T-cell (primary cell): ENCODE measurements at regions of chr2 and their contacts with region 1.

Region 1: DNA sequence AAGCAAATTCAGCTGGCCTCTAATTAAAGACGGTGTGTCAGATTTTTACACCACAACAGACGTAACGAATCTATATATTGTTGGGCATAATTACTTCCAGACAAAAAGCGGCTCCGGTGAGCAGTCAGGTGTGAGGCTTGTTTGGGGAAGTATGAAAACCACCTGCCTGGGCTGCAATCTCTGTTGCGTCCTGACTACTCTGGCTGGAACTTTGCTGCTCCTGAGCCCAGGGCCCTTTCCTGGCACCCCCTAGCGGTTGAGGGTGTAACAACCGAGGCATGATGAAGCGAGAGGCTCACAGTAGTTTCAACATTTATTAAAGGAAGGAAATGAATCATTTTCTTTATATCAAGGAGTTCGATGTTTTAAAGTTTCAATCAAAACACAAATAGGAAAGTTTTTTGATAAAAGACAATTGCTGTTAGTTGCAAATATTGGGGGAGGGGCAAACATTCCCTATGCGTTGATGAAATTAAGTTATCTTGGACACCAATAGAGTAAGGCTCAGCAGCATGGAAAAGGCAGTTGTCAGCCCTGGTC is 10.6 kb upstream of the ITGB6 start:
- DNase-seq: peak; percentile 33 to 78 (median 64)
- ATAC-seq: peak; percentile 71 to 92 (median 88)
- H3K4me3 ChIP-seq: no peak overlapping the region
- H3K4me3 Mint-ChIP-seq: no peak overlapping the region
- H3K27ac ChIP-seq: no peak overlapping the region
- H3K27ac Mint-ChIP-seq: no peak overlapping the region
- H3K4me1 ChIP-seq: peaks cover 0 to 4% of the 10 kb centered on the region in 2 experiments
- H3K4me1 Mint-ChIP-seq: peaks cover 13 to 17% (median 14%) of the 10 kb centered on the region in 3 donors
- H3K27me3 ChIP-seq: peaks cover 0 to 5% of the 10 kb centered on the region in 2 experiments
- H3K27me3 Mint-ChIP-seq: peaks cover 7 to 10% of the 10 kb centered on the region in 2 donors

Region 2: DNA sequence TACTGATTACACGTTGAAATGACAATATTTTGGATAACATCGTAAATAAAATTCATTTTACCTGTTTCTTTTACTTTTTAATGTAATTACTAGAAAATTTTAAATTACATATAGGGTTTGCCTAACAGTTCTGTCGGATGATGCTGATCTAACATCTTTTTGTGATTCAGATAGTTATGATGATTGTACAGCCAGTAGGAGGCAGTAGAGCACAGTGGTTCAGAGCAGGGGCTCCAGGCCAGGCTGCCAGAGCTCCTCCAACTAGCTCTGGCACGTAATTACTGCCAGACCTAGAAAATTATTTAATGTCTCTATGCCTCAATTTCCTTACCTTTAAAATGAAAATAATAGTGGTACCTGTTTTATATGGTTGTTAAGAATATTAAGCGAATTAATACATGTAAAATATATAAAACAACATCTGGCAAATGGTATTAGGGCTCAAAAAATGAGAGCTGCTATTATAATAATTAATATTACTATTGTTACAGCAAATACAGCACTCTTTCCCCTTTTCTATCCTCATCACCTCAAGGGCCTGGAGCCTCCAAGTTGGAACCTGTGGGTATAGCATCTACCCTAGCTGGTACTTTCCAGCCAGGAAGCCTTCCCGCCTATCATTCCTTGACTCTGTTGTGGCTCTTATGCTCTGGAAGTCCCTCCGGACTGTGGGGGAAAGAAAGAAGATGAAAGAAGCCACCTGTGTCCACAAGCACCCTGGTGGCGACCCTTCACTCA is 100.6 kb before region 1 on chr2:
- CTCF ChIA-PET with region 1: interaction called, 13 to 15 read pairs
- POLR2A ChIA-PET with region 1: no interaction called
- DNase-seq: peak in 33 of 35 experiments; percentile 8 to 78 (median 37)
- ATAC-seq: peak in 3 of 4 experiments; percentile 50 to 71 (median 52)
- H3K4me3 ChIP-seq: no peak overlapping the region
- H3K4me3 Mint-ChIP-seq: no peak overlapping the region
- H3K27ac ChIP-seq: no peak overlapping the region
- H3K27ac Mint-ChIP-seq: no peak overlapping the region
- H3K4me1 ChIP-seq: no peaks in the 10 kb centered on the region
- H3K4me1 Mint-ChIP-seq: no peaks in the 10 kb centered on the region
- H3K27me3 ChIP-seq: no peaks in the 10 kb centered on the region
- H3K27me3 Mint-ChIP-seq: peaks cover 5 to 19% of the 10 kb centered on the region in 2 donors

Region 3: DNA sequence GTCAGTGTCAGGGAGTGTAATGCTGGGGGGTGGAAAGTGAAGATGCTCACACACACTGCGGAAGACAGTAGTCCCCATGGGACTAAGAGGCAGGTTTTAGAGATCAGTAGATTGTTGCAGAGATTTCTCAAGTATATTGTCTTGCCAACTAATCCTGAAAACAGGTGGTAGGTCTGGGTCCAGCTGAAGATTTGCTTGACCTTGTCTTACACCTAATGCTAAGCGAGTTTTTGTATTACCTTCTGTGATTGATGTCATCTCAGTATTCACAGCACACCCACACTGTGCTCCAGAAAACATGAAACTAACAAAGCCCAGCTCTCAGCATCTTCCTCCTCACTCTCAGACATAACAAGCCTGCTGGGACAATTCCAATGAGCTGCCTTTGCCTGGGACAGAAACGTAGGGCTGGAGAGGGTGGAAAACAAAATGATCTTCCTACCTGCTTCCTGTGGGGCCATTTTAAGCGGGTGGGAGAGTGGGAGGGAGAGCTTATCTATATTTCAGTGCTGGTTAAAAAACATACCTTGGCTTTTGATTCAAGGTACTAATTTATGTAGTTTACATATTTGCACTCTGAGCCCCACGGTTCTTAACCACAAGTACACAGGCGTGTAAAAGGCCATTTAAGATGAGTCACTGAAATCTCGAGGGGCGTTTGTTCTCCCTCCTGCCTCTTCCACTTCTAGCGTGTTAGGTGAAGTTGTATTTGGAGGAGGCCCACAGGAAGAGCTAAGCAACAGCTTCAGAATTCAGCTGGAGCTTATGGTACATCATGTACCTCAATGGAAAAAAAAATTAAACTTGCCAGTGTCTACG is 306.1 kb after region 1 on chr2:
- CTCF ChIA-PET with region 1: no interaction called
- POLR2A ChIA-PET with region 1: no interaction called
- DNase-seq: no peak
- ATAC-seq: peak; percentile 28 to 80 (median 52)
- H3K4me3 ChIP-seq: no peak overlapping the region
- H3K4me3 Mint-ChIP-seq: peak overlapping the region in 1 of 3 donors; percentile 5
- H3K27ac ChIP-seq: no peak overlapping the region
- H3K27ac Mint-ChIP-seq: peak overlapping the region; percentile 34 to 69
- H3K4me1 ChIP-seq: peaks cover 0 to 5% of the 10 kb centered on the region in 2 experiments
- H3K4me1 Mint-ChIP-seq: peaks cover 25 to 31% (median 27%) of the 10 kb centered on the region in 3 donors
- H3K27me3 ChIP-seq: no peaks in the 10 kb centered on the region
- H3K27me3 Mint-ChIP-seq: no peaks in the 10 kb centered on the region